ENCODE measurements at regions of chr3 and their contacts with region 1.

Region 1: DNA sequence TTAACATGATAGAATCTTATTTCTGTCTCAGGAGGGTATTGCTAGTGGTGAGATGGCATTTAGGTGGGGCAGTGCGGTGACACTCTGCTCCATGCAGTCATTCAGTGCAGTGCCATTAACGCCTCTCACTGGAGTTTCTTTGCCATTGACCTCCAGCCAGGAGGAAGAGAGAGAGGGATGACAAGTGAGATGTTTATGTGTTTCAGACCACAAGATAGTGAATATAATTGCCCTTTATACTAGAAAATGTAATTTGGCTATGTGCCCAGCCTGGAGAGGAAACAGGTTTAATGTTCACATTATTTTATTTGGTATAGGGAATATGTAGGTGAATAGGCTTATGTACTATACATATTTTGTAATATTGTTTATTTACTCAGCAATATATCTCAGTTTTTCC is 84.5 kb downstream of the ZIC1 start:
- DNase-seq: no peak
- ATAC-seq: no peak
- H3K4me3 ChIP-seq: no peak overlapping the region
- H3K27ac ChIP-seq: no peak overlapping the region
- H3K4me1 ChIP-seq: no peaks in the 10 kb centered on the region
- H3K27me3 ChIP-seq: no peaks in the 10 kb centered on the region
- CTCF ChIP-seq: no peak
- EP300 ChIP-seq: no peak
- POLR2A ChIP-seq: no peak
- RAD21 ChIP-seq: no peak

Region 2: DNA sequence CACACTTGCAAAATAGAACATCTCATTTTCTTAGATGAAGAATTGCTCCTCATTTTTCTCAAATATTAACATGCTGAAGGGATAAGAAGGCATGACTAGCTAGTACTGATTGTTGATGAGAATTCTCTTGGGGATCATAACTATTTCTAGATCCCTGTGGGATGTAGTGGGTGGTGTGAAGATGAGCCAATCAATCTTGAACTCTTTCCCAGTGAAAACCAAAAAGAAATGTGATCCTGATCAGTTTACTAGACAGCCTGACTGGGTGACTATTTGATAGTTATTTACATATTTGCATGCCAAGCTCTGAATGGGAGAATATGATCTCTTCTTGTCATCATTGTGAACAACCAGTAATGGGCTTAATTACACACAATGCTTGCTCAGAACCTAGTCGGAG is 20.8 kb before region 1 on chr3:
- CTCF ChIA-PET with region 1: no interaction called
- POLR2A ChIA-PET with region 1: no interaction called
- in situ Hi-C with region 1: no loop called
- intact Hi-C with region 1: loop called (anchors 1 kb)
- DNase-seq: no peak
- ATAC-seq: no peak
- H3K4me3 ChIP-seq: no peak overlapping the region
- H3K27ac ChIP-seq: no peak overlapping the region
- H3K4me1 ChIP-seq: no peaks in the 10 kb centered on the region
- H3K27me3 ChIP-seq: no peaks in the 10 kb centered on the region
- CTCF ChIP-seq: no peak
- EP300 ChIP-seq: no peak
- POLR2A ChIP-seq: no peak
- RAD21 ChIP-seq: no peak

Measured in HepG2 (cell line).